ENCODE measurements at regions of chr19 and their contacts with region 1.

Region 1: DNA sequence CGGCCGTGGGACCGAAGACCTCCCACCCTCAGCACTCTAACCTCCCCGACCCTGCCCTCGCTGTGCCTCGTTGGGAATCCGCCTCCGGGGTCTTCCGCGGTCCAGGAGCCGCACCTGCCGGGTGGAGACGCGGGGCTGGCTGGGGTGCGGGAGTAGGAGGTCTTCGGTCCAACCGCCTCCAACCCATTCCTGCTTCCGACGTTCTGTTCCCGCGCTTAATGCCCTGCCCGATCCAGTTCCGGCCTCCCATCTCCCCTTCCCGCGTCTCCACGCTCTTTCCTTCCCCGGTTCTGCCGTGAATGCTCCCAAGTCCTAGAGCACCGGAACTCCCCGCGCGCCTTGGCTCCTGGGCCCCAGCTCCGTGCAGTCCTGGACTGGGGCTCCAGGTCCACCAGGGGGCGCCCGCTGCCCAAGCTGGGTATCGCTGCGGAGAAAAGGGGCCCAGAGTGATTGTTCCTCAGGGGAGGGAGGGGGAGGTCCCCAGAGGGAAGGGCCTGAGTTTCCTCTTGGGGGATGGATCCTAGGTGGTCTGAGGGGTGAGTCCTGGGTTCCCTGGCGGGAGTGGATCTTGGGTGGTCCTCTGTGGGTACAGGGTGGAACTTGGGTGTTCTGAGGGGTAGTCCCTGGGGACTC is 14.1 kb upstream of the TNFSF9 start:
- DNase-seq: peak; percentile 78 to 89 (median 86)
- H3K4me3 ChIP-seq: peak overlapping the region; percentile 48
- H3K27ac ChIP-seq: no peak overlapping the region
- H3K4me1 ChIP-seq: no peaks in the 10 kb centered on the region
- H3K27me3 ChIP-seq: no peaks in the 10 kb centered on the region
- CTCF ChIP-seq: peak; percentile 37 to 81 (median 55)
- EP300 ChIP-seq: no peak
- POLR2A ChIP-seq: no peak

Region 2: GRCh38 chr19:6862673-6863078 is 345.9 kb after region 1 on chr19:
- intact Hi-C with region 1: loop called in 1 of 4 experiments (anchors 10 kb)
- DNase-seq: peak; percentile 44 to 78 (median 56)
- H3K4me3 ChIP-seq: no peak overlapping the region
- H3K27ac ChIP-seq: no peak overlapping the region
- H3K4me1 ChIP-seq: no peaks in the 10 kb centered on the region
- H3K27me3 ChIP-seq: no peaks in the 10 kb centered on the region
- CTCF ChIP-seq: peak; percentile 36 to 54 (median 51)
- EP300 ChIP-seq: no peak
- POLR2A ChIP-seq: no peak